Activated B cell treated with CpG ODN at 0.5 μM for 24 hours (primary cell): ENCODE measurements at regions of chr12 and their contacts with region 1.

Region 1: DNA sequence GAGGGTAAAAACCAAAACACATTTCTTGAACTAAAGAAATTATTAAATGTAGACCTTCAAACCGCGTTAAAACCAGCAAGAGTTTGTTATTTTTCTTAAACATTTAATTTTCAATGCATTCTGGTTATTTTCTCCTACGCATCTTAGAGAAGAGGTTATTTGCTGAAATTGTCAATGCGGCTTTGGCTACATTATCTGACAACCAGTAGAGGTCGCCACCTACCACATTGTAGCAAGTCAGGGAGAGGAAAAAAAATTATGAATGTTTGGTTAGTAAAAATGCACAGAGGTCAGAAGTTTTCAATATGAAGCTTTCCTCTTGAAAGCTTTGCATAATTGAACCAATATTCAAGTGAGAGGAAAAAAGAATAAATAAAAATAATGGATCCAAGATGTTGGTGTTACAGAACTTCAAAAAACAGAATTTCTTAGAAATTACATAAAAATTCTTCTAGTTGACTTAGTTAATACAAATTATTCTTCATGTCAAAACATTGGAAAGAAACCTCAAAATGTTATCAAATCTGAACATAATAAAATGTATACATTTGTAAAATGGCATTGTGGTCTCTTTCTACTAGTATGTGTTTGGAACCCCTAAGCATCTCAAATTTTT is 159.4 kb upstream of the TMTC2 start:
- DNase-seq: no peak
- ATAC-seq: no peak
- H3K4me3 Mint-ChIP-seq: no peak overlapping the region
- H3K27ac Mint-ChIP-seq: no peak overlapping the region
- H3K4me1 Mint-ChIP-seq: no peaks in the 10 kb centered on the region
- H3K27me3 Mint-ChIP-seq: no peaks in the 10 kb centered on the region
- CTCF ChIP-seq: no peak

Region 2: GRCh38 chr12:82517027-82517426 is 10.2 kb before region 1 on chr12:
- CTCF ChIA-PET with region 1: no interaction called
- POLR2A ChIA-PET with region 1: no interaction called
- intact Hi-C with region 1: no loop called
- DNase-seq: no peak
- ATAC-seq: no peak
- H3K4me3 Mint-ChIP-seq: no peak overlapping the region
- H3K27ac Mint-ChIP-seq: no peak overlapping the region
- H3K4me1 Mint-ChIP-seq: no peaks in the 10 kb centered on the region
- H3K27me3 Mint-ChIP-seq: no peaks in the 10 kb centered on the region
- CTCF ChIP-seq: no peak

Region 3: DNA sequence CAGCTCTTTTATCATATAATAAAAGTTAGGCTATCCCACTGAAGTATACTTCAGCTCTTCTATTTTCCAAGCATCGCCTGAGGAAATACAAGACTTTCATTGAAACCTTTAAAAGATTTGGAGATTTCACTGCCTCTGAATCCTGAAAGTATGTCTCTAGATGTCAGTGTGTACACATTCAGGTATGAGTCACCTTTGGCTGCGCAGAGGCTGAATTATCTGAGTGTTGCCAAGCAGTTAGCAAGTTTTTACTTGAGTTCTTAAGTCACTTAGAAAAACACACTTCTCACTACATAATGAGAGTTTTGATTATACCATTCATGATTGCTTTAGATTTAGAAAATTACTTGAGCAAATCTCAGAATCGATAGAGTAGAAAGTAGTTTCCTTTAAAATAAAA is 369.7 kb after region 1 on chr12:
- CTCF ChIA-PET with region 1: no interaction called
- POLR2A ChIA-PET with region 1: no interaction called
- intact Hi-C with region 1: no loop called
- DNase-seq: no peak
- ATAC-seq: no peak
- H3K4me3 Mint-ChIP-seq: no peak overlapping the region
- H3K27ac Mint-ChIP-seq: no peak overlapping the region
- H3K4me1 Mint-ChIP-seq: no peaks in the 10 kb centered on the region
- H3K27me3 Mint-ChIP-seq: no peaks in the 10 kb centered on the region
- CTCF ChIP-seq: no peak

Region 4: GRCh38 chr12:83005534-83006197 is 478.4 kb after region 1 on chr12:
- CTCF ChIA-PET with region 1: no interaction called
- POLR2A ChIA-PET with region 1: no interaction called
- intact Hi-C with region 1: no loop called
- DNase-seq: no peak
- ATAC-seq: no peak
- H3K4me3 Mint-ChIP-seq: no peak overlapping the region
- H3K27ac Mint-ChIP-seq: no peak overlapping the region
- H3K4me1 Mint-ChIP-seq: no peaks in the 10 kb centered on the region
- H3K27me3 Mint-ChIP-seq: no peaks in the 10 kb centered on the region
- CTCF ChIP-seq: no peak

Region 5: DNA sequence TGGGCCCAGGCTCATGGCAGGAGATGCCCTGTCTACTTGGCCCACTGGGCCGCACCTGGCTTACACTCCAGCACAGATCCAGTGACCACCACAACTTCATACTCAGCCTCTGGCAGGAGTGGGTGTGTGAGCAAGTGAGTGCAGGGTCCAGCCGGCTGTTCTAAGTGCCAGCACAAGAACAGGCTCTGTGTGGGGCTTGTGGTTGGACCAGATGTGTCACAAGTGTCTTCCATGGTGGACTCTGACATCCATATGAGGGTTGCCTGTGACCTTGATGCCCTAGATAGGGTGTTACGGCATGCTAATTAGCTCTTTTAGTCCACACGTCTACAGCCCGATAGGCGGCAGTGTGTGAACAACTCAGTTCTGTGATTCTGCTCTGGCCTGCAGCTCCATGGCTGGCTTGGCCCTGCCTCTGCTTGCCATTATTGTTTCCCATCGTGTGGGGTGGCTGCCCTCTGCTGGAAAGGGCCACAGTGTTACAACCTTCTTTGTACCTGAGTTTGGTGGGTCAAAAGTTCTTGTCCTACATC is 1296.2 kb after region 1 on chr12:
- CTCF ChIA-PET with region 1: no interaction called
- POLR2A ChIA-PET with region 1: no interaction called
- intact Hi-C with region 1: loop called (anchors 5 kb)
- DNase-seq: no peak
- ATAC-seq: no peak
- H3K4me3 Mint-ChIP-seq: no peak overlapping the region
- H3K27ac Mint-ChIP-seq: no peak overlapping the region
- H3K4me1 Mint-ChIP-seq: no peaks in the 10 kb centered on the region
- H3K27me3 Mint-ChIP-seq: no peaks in the 10 kb centered on the region
- CTCF ChIP-seq: no peak

Region 6: GRCh38 chr12:84397263-84397662 is 1870.0 kb after region 1 on chr12:
- CTCF ChIA-PET with region 1: no interaction called
- POLR2A ChIA-PET with region 1: no interaction called
- intact Hi-C with region 1: loop called (anchors 10 kb)
- DNase-seq: no peak
- ATAC-seq: no peak
- H3K4me3 Mint-ChIP-seq: no peak overlapping the region
- H3K27ac Mint-ChIP-seq: no peak overlapping the region
- H3K4me1 Mint-ChIP-seq: no peaks in the 10 kb centered on the region
- H3K27me3 Mint-ChIP-seq: no peaks in the 10 kb centered on the region
- CTCF ChIP-seq: no peak